CD8-positive, alpha-beta memory T cell (primary cell): ENCODE measurements at regions of chr5 and their contacts with region 1.

Region 1: DNA sequence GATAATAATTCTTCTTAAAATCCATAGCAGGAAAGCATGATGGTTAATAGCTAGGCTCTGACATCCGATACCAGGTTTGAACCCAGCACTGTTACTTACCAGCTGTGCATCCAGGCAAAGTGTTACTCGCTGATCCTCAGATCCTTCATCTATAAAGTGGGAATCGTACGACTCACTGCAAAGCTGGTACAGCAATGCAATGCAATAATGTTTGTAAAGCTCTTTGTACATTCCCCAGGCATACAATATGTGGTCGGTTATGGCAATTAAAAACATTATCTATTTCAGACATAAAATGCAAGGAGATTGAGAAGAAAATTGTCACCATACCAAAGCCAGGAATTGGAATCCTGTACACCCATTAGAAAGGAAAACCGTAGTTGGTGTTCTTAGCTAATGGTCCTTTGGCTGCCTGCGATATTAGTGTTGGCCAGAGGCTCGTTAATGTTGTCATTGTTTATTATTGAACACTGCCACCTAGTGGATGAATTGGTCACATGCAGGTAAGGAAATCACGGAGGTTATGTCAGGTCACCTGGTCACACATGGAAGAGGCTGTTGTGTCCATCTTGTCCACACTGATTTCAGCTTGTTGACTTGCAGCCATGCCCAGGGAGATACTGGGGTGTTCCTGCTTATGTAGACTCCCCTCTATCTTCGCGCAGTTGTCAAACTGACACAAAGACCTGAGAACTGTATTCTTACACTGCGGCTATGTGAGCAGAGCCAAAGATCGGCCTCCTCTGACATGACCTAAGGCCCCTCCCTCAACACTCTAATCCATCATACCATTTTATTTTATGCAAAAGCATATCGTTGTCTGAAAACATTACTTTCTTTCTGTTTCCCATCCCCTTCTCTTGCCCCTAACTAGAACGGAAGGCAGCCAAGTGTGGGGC is 87.5 kb upstream of the PPP2R2B start:
- DNase-seq: peak; percentile 20 to 57 (median 55)
- H3K4me3 ChIP-seq: no peak overlapping the region
- H3K4me3 Mint-ChIP-seq: no peak overlapping the region
- H3K27ac ChIP-seq: no peak overlapping the region
- H3K27ac Mint-ChIP-seq: no peak overlapping the region
- H3K4me1 ChIP-seq: no peaks in the 10 kb centered on the region
- H3K4me1 Mint-ChIP-seq: no peaks in the 10 kb centered on the region
- H3K27me3 ChIP-seq: no peaks in the 10 kb centered on the region
- H3K27me3 Mint-ChIP-seq: peaks cover 0 to 2% of the 10 kb centered on the region in 2 donors

Region 2: DNA sequence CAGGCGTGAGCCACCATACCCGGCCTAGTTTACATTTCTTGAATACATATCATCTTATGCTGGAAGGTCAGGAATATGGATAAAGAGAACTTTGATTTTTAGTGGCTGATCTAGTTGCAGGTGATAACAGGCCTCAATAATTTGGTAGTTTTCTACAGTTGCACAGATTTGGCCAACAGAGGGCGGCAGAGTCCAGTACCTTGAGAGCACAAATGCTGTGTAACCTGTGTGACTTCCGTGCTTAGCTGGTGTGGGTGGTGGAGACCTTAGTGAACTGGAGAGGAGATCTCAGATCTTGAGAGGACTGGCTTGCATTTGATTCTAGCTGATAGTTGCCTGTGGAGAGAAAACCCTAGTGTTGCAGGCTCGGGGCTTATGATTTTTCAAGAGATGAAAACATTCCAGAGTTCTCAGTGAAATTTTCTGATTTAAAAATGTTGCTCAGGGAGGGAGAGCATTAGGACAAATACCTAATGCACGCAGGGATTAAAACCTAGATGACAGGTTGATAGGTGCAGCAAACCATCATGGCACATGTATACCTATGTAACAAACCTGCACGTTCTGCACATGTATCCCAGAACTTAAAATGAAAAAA is 432.7 kb before region 1 on chr5:
- CTCF ChIA-PET with region 1: interaction called, 33 read pairs
- POLR2A ChIA-PET with region 1: no interaction called
- DNase-seq: peak; percentile 45 to 81 (median 51)
- H3K4me3 ChIP-seq: no peak overlapping the region
- H3K4me3 Mint-ChIP-seq: no peak overlapping the region
- H3K27ac ChIP-seq: no peak overlapping the region
- H3K27ac Mint-ChIP-seq: peak overlapping the region in 1 of 8 donors; percentile 78
- H3K4me1 ChIP-seq: no peaks in the 10 kb centered on the region
- H3K4me1 Mint-ChIP-seq: peaks cover 3 to 5% (median 4%) of the 10 kb centered on the region in 3 donors
- H3K27me3 ChIP-seq: no peaks in the 10 kb centered on the region
- H3K27me3 Mint-ChIP-seq: peaks cover under 1 to 3% of the 10 kb centered on the region in 2 donors

Region 3: GRCh38 chr5:146541958-146542849 is 423.8 kb before region 1 on chr5:
- CTCF ChIA-PET with region 1: interaction called, 48 read pairs
- POLR2A ChIA-PET with region 1: no interaction called
- DNase-seq: peak; percentile 48 to 73 (median 52)
- H3K4me3 ChIP-seq: no peak overlapping the region
- H3K4me3 Mint-ChIP-seq: no peak overlapping the region
- H3K27ac ChIP-seq: no peak overlapping the region
- H3K27ac Mint-ChIP-seq: no peak overlapping the region
- H3K4me1 ChIP-seq: no peaks in the 10 kb centered on the region
- H3K4me1 Mint-ChIP-seq: peaks cover 0 to 2% (median 0%) of the 10 kb centered on the region in 3 donors
- H3K27me3 ChIP-seq: no peaks in the 10 kb centered on the region
- H3K27me3 Mint-ChIP-seq: no peaks in the 10 kb centered on the region

Region 4: GRCh38 chr5:146565764-146566367 is 400.1 kb before region 1 on chr5:
- CTCF ChIA-PET with region 1: interaction called, 36 read pairs
- POLR2A ChIA-PET with region 1: no interaction called
- DNase-seq: peak; percentile 11 to 71 (median 43)
- H3K4me3 ChIP-seq: no peak overlapping the region
- H3K4me3 Mint-ChIP-seq: peak overlapping the region in 4 of 7 donors; percentile 4 to 60 (median 40)
- H3K27ac ChIP-seq: no peak overlapping the region
- H3K27ac Mint-ChIP-seq: no peak overlapping the region
- H3K4me1 ChIP-seq: no peaks in the 10 kb centered on the region
- H3K4me1 Mint-ChIP-seq: peaks cover 5 to 6% (median 5%) of the 10 kb centered on the region in 3 donors
- H3K27me3 ChIP-seq: no peaks in the 10 kb centered on the region
- H3K27me3 Mint-ChIP-seq: no peaks in the 10 kb centered on the region

Region 5: DNA sequence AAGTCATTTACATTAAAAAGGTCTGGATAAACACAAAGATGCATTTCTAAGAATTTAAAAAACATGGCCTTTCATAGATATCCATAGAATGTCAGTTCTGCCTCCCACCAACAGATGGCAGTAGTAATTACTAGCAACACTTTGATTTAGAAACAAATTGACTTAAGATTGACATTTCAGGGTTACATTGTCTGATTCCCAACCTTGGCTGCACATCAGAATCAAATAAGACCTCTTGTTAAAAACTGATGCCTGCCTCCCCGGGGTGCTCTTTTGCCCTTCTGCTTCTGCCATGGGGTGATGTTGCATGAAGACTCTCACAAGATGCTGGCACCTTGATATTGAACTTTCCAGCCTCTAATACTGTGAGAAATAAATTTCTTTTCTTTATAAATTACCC is 303.8 kb before region 1 on chr5:
- CTCF ChIA-PET with region 1: interaction called, 87 read pairs
- POLR2A ChIA-PET with region 1: no interaction called
- DNase-seq: peak in 2 of 5 donors; percentile 35 to 36
- H3K4me3 ChIP-seq: no peak overlapping the region
- H3K4me3 Mint-ChIP-seq: no peak overlapping the region
- H3K27ac ChIP-seq: no peak overlapping the region
- H3K27ac Mint-ChIP-seq: no peak overlapping the region
- H3K4me1 ChIP-seq: peaks cover 4% of the 10 kb centered on the region
- H3K4me1 Mint-ChIP-seq: peaks cover 0 to 5% (median 4%) of the 10 kb centered on the region in 3 donors
- H3K27me3 ChIP-seq: no peaks in the 10 kb centered on the region
- H3K27me3 Mint-ChIP-seq: no peaks in the 10 kb centered on the region

Region 6: GRCh38 chr5:147346006-147346561 is 380.1 kb after region 1 on chr5:
- CTCF ChIA-PET with region 1: no interaction called
- POLR2A ChIA-PET with region 1: no interaction called
- DNase-seq: no peak
- H3K4me3 ChIP-seq: no peak overlapping the region
- H3K4me3 Mint-ChIP-seq: no peak overlapping the region
- H3K27ac ChIP-seq: no peak overlapping the region
- H3K27ac Mint-ChIP-seq: no peak overlapping the region
- H3K4me1 ChIP-seq: no peaks in the 10 kb centered on the region
- H3K4me1 Mint-ChIP-seq: no peaks in the 10 kb centered on the region
- H3K27me3 ChIP-seq: no peaks in the 10 kb centered on the region
- H3K27me3 Mint-ChIP-seq: no peaks in the 10 kb centered on the region